ENCODE measurements at regions of chr18 and their contacts with region 1.

Region 1: DNA sequence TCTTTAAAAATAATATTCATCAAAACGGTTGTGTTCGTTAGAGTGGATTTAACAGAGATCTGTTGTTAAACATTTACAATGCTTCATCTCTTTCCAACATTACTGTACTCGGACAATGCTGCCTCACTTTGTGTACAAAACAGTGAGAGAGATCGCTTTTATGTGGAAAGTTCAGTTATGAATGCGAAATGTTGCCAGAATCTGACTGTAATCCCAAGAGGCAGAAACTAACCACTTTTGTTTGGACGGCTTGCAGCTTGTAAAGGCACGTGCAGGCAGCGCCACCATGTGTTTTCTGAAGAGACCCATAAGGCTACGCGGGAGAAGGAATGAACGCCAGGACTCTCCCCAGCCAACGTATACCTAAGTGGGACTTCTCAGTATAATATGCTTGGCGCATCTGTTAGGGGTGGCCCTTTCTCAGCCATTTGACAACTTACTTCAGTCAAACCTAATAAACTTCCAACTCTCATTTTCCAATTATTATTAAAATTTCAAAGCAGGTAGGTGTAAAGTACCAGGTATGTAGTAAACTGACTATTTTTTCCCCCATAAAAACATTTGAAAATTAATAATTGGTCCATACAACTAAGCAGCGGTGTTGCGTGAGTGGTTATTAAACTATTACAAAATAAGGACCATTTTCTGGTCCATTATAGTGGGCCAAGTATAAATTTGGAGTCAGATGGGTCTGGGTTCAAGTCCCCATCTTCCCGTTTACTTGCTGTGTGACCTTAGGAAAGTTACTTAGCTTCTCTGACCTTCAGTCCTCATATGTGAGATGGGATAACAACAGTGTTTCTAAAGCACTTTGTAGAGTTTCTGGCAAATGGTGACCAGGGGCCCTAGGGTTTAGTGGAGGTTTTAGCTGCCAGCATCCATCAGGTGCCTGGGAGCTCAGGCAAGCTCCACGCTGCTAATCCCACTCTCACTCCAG is 5.6 kb upstream of the NAPG start:
- DNase-seq: peak; percentile 84
- H3K4me3 ChIP-seq: no peak overlapping the region
- H3K27ac ChIP-seq: peak overlapping the region in 3 of 4 donors; percentile 10 to 65 (median 26)
- H3K4me1 ChIP-seq: peaks cover 0 to 28% (median 9%) of the 10 kb centered on the region in 4 donors
- H3K27me3 ChIP-seq: no peaks in the 10 kb centered on the region
- CTCF ChIP-seq: peak; percentile 62 to 77 (median 67)
- EP300 ChIP-seq: no peak
- POLR2A ChIP-seq: no peak

Region 2: GRCh38 chr18:9971313-9971920 is 548.9 kb before region 1 on chr18:
- in situ Hi-C with region 1: loop called (anchors 5 to 10 kb)
- intact Hi-C with region 1: loop called (anchors 5 kb)
- DNase-seq: peak; percentile 78
- H3K4me3 ChIP-seq: no peak overlapping the region
- H3K27ac ChIP-seq: no peak overlapping the region
- H3K4me1 ChIP-seq: peaks cover 0 to 3% (median 0%) of the 10 kb centered on the region in 4 donors
- H3K27me3 ChIP-seq: no peaks in the 10 kb centered on the region
- CTCF ChIP-seq: peak; percentile 72 to 86 (median 78)
- EP300 ChIP-seq: no peak
- POLR2A ChIP-seq: no peak

Region 3: DNA sequence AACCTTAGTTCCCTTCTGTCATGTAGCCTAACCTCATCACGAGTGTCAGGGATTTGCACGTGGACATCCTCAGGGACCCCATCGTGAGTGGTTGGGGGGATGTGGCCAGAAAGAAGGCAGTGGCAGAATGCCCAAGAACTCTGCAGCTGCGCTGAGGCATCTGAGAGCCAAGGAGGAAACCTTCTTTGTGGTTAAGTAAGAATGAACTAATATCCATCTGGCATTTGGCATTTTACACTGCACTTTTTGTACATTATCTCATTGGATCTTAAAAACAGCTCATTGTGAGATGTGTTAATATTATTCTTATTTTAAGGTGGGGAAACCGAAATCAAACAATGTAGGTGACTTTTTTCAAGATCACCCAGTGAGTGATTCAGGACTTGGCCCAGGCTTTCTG is 98.4 kb before region 1 on chr18:
- in situ Hi-C with region 1: loop called in 1 of 4 experiments (anchors 25 kb)
- intact Hi-C with region 1: no loop called
- DNase-seq: no peak
- H3K4me3 ChIP-seq: no peak overlapping the region
- H3K27ac ChIP-seq: no peak overlapping the region
- H3K4me1 ChIP-seq: no peaks in the 10 kb centered on the region
- H3K27me3 ChIP-seq: no peaks in the 10 kb centered on the region
- CTCF ChIP-seq: no peak
- EP300 ChIP-seq: no peak
- POLR2A ChIP-seq: no peak